Right ventricle myocardium superior (tissue), 1 donor: ENCODE measurements at regions of chr5 and their contacts with region 1.

Region 1: GRCh38 chr5:141557681-141558136 is 61.1 kb downstream of the DIAPH1 start:
- DNase-seq: peak; percentile 88
- ATAC-seq: peak; percentile 80

Region 2: DNA sequence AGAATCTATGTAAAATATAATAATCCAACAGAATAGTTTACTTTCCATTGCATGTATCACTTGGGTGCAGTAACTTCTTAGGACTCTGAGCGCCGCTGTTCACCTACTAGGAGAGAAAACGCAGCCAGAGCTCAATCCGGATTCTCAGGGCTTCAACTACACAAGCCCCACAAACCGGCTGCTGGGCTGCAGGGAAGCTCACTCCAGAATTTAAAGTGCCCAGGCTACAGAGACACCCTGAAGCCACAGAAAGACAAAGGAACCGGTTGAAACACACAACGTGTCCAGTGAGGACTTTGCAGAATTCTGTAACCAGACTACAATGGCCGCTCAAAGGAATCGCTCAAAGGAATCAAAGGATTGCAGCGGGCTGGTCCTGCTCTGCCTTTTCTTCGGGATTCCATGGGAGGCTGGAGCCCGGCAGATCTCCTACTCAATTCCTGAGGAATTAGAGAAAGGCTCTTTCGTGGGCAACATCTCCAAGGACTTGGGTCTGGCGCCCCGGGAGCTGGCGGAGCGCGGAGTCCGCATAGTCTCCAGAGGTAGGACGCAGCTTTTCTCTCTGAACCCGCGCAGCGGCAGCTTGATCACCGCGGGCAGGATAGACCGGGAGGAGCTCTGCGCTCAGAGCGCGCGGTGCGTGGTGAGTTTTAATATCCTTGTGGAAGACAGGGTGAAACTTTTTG is 144.7 kb before region 1 on chr5 and contains the start of gene PCDHGA10:
- intact Hi-C with region 1: loop called (anchors 2 kb)
- DNase-seq: no peak
- ATAC-seq: peak; percentile 73
- total RNA-seq, gene PCDHGA10: 5.4 TPM

Region 3: DNA sequence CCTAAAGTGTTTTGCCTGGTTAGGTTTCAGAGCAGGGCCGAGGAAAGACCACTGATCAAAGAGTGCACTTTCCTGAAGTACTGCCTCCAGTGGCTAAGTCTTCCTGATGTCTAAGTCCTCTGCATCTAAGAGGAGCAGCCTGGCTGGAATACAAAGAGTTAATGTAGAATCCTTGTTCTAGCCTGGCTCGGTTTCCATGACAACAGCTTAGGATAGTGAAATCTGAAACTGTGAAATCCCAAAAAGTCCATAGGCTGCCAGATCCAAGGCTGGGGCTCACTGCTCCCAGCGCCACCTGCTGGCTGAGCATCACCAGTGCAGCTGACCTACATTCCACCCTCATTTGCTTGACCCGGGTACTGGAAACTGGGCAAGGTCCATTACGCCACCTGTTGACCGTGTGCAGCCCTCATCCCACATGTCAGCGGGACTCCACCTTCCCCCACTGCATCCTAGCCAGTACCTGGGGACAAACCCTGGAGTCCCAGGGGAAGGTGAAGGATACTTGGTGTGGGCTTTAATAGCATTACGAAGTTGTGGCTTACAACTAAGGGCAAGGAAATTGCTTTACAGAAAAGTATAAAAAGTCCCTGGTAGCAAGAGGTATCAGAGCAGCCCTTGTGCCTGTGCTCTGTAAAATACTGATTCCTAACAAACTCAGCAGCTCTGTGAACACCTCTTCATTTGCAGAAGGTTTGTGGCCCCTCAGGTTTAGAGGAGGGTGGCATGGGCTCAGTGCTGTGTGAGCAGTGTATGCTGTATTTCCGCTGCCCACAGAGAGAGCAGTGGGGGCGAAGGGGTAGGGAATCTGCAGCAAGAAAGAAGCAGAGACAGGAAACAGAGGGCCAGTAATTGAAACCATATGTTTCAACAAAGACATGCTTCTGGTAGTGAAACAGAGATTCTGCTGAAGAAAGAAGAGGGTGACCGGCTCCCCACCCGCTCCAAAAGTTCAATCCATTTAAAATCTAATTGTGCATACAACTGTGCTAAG is 32.8 kb before region 1 on chr5:
- intact Hi-C with region 1: loop called (anchors 2 kb)
- DNase-seq: peak; percentile 91
- ATAC-seq: peak; percentile 78

Region 4: DNA sequence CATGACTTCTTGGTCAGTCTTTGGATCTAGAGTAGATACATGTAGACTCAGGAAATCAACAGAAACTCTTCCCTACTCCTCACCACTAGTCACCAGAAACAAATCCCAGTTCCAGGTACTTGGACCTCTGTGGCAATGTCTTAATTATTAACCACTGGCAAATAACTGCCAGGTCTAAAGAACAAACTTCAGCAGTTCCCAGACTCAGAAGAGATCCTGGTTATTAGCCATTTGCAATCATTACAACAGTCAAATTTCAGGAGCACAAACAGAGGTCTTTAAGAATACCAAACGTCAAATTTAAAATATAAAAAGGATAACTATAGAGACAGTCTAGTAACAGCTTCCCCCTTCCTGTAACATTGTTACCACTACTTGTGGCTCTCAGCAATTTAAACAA is 50.8 kb after region 1 on chr5:
- intact Hi-C with region 1: no loop called
- DNase-seq: no peak
- ATAC-seq: no peak